K562 (cell line): ENCODE measurements at regions of chr4 and their contacts with region 1.

Region 1: GRCh38 chr4:74671080-74671698 is 123.1 kb downstream of the BTC start:
- DNase-seq: peak; percentile 10 to 74 (median 37)
- ATAC-seq: peak; percentile 87
- H3K4me3 ChIP-seq: no peak overlapping the region
- H3K27ac ChIP-seq: no peak overlapping the region
- H3K4me1 ChIP-seq: no peaks in the 10 kb centered on the region
- H3K27me3 ChIP-seq: no peaks in the 10 kb centered on the region
- CTCF ChIP-seq: peak; percentile 70 to 90 (median 71)
- EP300 ChIP-seq: no peak
- POLR2A ChIP-seq: no peak
- RAD21 ChIP-seq: peak; percentile 88 to 92

Region 2: DNA sequence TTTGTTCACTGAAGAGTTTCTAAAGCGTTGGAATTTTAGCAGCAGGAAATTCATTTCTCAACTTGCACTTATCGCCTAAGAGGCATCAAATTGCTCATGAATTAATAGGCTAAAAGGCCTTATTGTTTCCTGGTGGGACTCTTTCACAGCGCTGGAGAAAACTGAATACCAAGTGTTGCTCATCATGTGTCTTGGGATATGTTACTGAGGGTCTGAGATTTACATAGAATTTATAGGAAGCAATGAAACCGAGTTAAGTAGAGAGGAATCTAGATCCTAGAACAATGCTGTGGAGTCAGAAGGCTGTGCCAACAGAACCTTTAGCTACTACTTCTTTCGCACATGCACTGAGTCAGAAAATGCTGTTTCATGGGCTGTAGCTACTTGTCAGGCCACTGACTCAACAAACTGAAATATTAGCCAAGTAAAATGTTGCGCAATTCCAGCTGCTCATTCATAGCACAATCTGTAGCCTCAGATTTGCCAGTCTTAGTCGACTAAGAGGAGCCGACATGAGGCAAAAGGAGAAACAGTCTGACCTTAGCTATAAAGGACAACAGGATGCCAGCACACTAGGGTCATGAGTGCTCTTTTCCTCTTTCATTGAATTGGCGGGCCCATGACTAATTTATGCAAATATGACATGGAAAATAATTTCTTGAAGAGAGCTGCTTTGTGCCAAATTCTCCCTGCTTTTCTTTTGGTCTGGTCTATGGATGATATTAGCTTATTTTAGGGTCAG is 966.7 kb before region 1 on chr4:
- CTCF ChIA-PET with region 1: no interaction called
- POLR2A ChIA-PET with region 1: no interaction called
- in situ Hi-C with region 1: loop called (anchors 25 kb)
- intact Hi-C with region 1: no loop called
- DNase-seq: peak; percentile 28 to 88 (median 47)
- ATAC-seq: peak; percentile 82
- H3K4me3 ChIP-seq: no peak overlapping the region
- H3K27ac ChIP-seq: peak overlapping the region; percentile 84
- H3K4me1 ChIP-seq: peaks cover 0 to 68% of the 10 kb centered on the region in 2 experiments; a peak in 4 of 5 replicates
- H3K27me3 ChIP-seq: no peaks in the 10 kb centered on the region
- CTCF ChIP-seq: no peak
- EP300 ChIP-seq: peak; percentile 96
- POLR2A ChIP-seq: no peak
- RAD21 ChIP-seq: peak in 1 of 2 experiments; percentile 27; a peak in 2 of 4 replicates

Region 3: DNA sequence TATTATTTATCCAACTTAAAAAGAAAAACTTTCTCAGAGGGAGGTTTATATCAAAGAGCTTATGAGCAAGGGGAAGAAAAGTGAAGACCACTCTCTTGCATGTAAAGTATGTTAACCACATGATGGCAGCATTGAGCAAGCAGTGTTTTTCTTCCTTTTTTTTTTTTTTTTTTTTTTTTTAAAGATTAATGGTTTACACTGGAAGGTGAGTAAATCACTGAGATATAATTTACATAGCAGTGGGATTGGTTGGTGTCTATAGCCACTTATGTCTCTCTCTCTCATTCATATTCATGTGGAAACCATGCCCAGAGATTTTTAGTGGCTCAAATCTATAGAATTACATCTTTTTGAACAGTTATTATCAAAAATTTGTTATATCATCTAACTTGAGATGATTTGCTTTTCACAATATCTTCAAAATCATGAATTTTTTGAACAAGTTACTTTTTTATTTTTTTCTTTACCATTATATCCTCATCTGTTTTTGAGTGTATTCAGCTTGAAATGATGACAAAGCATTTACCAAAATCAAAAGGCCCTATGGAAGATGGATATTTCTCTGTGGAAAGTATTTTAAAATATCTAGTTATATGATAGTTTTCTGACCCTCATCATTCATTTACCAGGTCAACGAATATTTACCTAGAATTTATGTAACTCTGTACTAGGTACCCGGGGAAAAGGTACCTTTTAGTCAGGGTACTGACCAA is 481.7 kb before region 1 on chr4:
- CTCF ChIA-PET with region 1: no interaction called
- POLR2A ChIA-PET with region 1: no interaction called
- in situ Hi-C with region 1: no loop called
- intact Hi-C with region 1: loop called (anchors 1 kb)
- DNase-seq: peak; percentile 33 to 70 (median 42)
- ATAC-seq: peak; percentile 67
- H3K4me3 ChIP-seq: no peak overlapping the region
- H3K27ac ChIP-seq: no peak overlapping the region
- H3K4me1 ChIP-seq: no peaks in the 10 kb centered on the region
- H3K27me3 ChIP-seq: no peaks in the 10 kb centered on the region
- CTCF ChIP-seq: peak; percentile 46 to 75 (median 55); a peak in 5 of 6 replicates
- EP300 ChIP-seq: no peak
- POLR2A ChIP-seq: no peak
- RAD21 ChIP-seq: peak; percentile 67 to 69

Region 4: DNA sequence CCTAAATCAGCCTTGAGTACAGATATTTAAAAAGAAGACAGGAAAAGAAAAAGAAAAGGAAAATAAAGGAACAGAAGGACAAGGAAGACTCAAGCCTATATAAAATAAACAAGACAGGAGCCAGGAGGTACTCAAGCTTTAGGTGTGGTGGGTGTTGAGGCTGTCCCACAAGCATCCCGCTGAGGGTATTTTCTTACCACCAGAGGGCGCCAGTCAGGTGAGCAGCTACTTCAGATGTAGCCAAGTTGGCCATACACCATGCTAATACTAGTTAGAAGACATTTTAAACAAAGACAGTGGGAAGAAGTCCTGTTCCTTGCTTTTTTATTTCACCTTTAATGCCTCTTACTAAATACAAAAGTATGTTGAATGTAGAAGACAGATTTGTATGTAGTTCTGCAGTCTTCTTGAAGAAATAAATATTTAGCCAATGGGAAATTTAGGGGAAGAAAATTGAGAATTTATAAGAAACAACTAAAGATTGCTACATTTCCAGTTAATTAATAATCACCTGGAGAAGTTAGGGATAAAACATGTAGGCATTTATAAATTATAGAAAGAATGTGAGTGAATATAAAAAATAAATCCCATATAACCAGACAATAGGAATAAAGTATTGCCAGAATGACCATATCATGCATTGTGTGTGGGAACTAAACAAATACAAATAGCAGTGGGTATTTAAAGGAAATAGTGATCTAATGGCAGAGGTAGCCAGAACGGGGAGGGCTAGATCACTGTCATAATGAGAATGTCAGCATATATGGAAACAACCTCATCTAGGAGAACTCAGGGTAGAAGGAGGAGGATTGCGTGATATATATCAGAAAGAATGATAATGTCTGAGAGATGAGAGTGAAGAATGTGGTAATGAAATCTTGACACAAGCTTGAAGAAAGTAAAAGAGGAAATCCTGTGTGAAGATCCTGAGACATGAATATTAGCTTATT is 442.2 kb before region 1 on chr4:
- CTCF ChIA-PET with region 1: no interaction called
- POLR2A ChIA-PET with region 1: interaction called, 3 read pairs
- in situ Hi-C with region 1: no loop called
- intact Hi-C with region 1: loop called (anchors 2 kb)
- DNase-seq: peak; percentile 59 to 87 (median 70)
- ATAC-seq: peak; percentile 99
- H3K4me3 ChIP-seq: no peak overlapping the region
- H3K27ac ChIP-seq: no peak overlapping the region
- H3K4me1 ChIP-seq: peaks cover 0 to 6% of the 10 kb centered on the region in 2 experiments; a peak in 2 of 5 replicates
- H3K27me3 ChIP-seq: no peaks in the 10 kb centered on the region
- CTCF ChIP-seq: peak; percentile 83 to 89 (median 86)
- EP300 ChIP-seq: no peak
- POLR2A ChIP-seq: no peak
- RAD21 ChIP-seq: peak; percentile 68 to 82

Region 5: GRCh38 chr4:74320559-74321118 is 350.6 kb before region 1 on chr4:
- CTCF ChIA-PET with region 1: interaction called, 10 read pairs
- POLR2A ChIA-PET with region 1: interaction called, 7 read pairs
- in situ Hi-C with region 1: loop called (anchors 5 kb)
- intact Hi-C with region 1: loop called (anchors 1 kb)
- DNase-seq: peak; percentile 17 to 77 (median 40)
- ATAC-seq: peak; percentile 73
- H3K4me3 ChIP-seq: no peak overlapping the region
- H3K27ac ChIP-seq: peak overlapping the region; percentile 2; the same call in 1 of the 3 replicates
- H3K4me1 ChIP-seq: peaks cover 5 to 30% of the 10 kb centered on the region in 2 experiments
- H3K27me3 ChIP-seq: no peaks in the 10 kb centered on the region
- CTCF ChIP-seq: peak; percentile 65 to 78 (median 68); a peak in 5 of 6 replicates
- EP300 ChIP-seq: no peak
- POLR2A ChIP-seq: no peak
- RAD21 ChIP-seq: peak; percentile 78 to 84

Region 6: DNA sequence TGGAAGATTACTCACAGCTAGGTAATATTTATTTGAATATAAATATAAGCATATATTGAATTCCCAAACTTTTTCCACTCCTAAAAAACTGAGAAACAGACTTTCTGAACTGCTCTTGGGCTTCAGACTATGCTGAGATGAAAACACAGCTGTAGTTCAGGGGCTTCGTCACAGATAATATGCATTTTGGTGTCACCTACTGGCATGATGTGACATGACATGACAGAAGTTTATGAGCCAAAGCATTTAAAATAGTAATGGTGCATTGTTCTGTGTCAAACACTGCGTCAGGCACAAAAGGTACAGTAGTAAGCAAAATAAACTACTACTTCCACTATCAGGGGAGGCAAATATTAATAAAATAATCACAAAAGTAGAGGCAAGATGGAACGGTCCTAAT is 48.1 kb before region 1 on chr4:
- CTCF ChIA-PET with region 1: no interaction called
- POLR2A ChIA-PET with region 1: no interaction called
- in situ Hi-C with region 1: no loop called
- intact Hi-C with region 1: loop called (anchors 1 kb)
- DNase-seq: peak; percentile 53 to 77 (median 59)
- ATAC-seq: peak; percentile 95
- H3K4me3 ChIP-seq: no peak overlapping the region
- H3K27ac ChIP-seq: no peak overlapping the region
- H3K4me1 ChIP-seq: peaks cover 0 to 8% of the 10 kb centered on the region in 2 experiments; a peak in 2 of 5 replicates
- H3K27me3 ChIP-seq: no peaks in the 10 kb centered on the region
- CTCF ChIP-seq: peak; percentile 73 to 79 (median 76)
- EP300 ChIP-seq: no peak
- POLR2A ChIP-seq: no peak
- RAD21 ChIP-seq: peak; percentile 88 to 90